Tibial artery (tissue), 4 donors: ENCODE measurements at regions of chr9 and their contacts with region 1.

Region 1: DNA sequence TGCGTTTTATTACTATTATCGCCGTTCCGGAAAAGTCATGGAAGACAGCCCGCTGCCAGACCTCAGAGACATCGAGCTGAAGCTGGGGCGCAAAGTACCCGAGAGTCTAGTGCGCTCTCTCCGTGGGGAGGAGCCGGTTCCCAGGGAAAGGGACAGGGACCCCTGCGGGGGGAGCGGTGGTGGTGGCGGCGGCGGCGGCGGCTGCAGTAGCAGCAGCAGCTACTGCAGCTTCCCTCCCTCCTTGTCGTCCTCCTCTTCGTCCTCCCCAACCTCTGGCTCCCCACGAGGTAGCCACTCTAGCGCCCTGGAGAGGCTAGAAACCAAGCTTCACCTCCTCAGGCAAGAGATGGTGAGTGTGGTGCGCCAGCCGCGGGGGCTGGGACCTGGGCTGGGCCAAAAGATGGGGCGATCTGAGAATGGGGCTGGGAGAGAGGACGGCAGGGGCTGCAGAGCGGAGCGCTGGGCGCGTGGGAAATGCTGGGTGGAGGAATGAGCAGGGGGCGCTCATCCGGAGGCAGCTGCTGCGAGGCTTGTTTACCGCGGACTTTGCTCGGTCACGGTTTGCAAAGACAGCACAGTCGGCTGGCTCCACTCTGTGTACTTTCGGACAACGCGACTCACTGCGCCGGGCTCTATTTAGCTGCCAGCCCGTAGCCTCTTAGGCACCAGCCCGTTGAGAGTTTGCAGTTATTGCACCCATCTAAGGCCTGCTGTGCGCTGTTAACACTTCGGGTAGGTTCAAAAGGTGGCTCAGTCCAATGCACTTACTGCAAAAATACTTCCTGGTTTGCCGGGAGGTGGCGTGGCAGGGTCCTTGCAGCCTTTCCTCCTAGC is 1.1 kb downstream of the LURAP1L start:
- DNase-seq: peak in 1 of 2 donors; percentile 26
- H3K4me3 ChIP-seq: peak overlapping the region; percentile 65 to 88
- H3K27ac ChIP-seq: peak overlapping the region; percentile 89 to 97
- H3K4me1 ChIP-seq: peaks cover 0 to 56% (median 3%) of the 10 kb centered on the region in 4 donors
- H3K27me3 ChIP-seq: no peaks in the 10 kb centered on the region
- CTCF ChIP-seq: peak; percentile 47 to 50

Region 2: GRCh38 chr9:12554636-12555035 is 221.3 kb before region 1 on chr9:
- intact Hi-C with region 1: no loop called
- DNase-seq: no peak
- H3K4me3 ChIP-seq: no peak overlapping the region
- H3K27ac ChIP-seq: no peak overlapping the region
- H3K4me1 ChIP-seq: no peaks in the 10 kb centered on the region
- H3K27me3 ChIP-seq: no peaks in the 10 kb centered on the region
- CTCF ChIP-seq: no peak

Region 3: DNA sequence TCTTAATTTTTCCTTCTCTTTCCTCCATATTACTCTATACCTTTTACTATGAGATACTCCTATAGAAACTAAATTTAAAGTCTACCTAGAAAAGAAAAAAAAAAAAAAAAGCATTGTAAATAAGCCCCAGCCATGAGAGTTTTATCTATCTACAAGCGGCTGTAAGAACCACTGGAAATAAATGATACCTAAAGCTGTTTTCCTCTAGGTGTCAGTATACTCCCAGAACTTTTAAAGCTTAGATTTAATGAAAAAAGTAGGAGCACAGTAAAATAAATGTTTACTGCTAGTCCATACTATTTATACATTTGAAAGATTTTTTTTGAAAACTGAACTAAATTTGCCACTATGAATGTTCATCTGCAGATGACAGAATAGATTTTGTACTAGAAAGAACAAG is 56.5 kb before region 1 on chr9:
- intact Hi-C with region 1: loop called (anchors 10 kb)
- DNase-seq: no peak
- H3K4me3 ChIP-seq: no peak overlapping the region
- H3K27ac ChIP-seq: no peak overlapping the region
- H3K4me1 ChIP-seq: no peaks in the 10 kb centered on the region
- H3K27me3 ChIP-seq: no peaks in the 10 kb centered on the region
- CTCF ChIP-seq: peak; percentile 55 to 57

Region 4: GRCh38 chr9:12838546-12838945 is 62.6 kb after region 1 on chr9:
- intact Hi-C with region 1: loop called (anchors 10 kb)
- DNase-seq: no peak
- H3K4me3 ChIP-seq: no peak overlapping the region
- H3K27ac ChIP-seq: peak overlapping the region; percentile 41 to 69
- H3K4me1 ChIP-seq: peaks cover 0 to 22% (median 3%) of the 10 kb centered on the region in 4 donors
- H3K27me3 ChIP-seq: no peaks in the 10 kb centered on the region
- CTCF ChIP-seq: no peak

Region 5: GRCh38 chr9:12849486-12850004 is 73.6 kb after region 1 on chr9:
- intact Hi-C with region 1: no loop called
- DNase-seq: no peak
- H3K4me3 ChIP-seq: no peak overlapping the region
- H3K27ac ChIP-seq: no peak overlapping the region
- H3K4me1 ChIP-seq: peaks cover 0 to 16% (median 3%) of the 10 kb centered on the region in 4 donors
- H3K27me3 ChIP-seq: no peaks in the 10 kb centered on the region
- CTCF ChIP-seq: no peak

Region 6: GRCh38 chr9:12884737-12885414 is 109.0 kb after region 1 on chr9:
- intact Hi-C with region 1: loop called (anchors 2 kb)
- DNase-seq: no peak
- H3K4me3 ChIP-seq: no peak overlapping the region
- H3K27ac ChIP-seq: no peak overlapping the region
- H3K4me1 ChIP-seq: peaks cover 0 to 34% (median 10%) of the 10 kb centered on the region in 4 donors
- H3K27me3 ChIP-seq: no peaks in the 10 kb centered on the region
- CTCF ChIP-seq: peak; percentile 60 to 65